Activated CD4-positive, alpha-beta T cell treated with anti-CD3 and anti-CD28 coated beads, Interleukin-2, amount 10 ng/mL, durations not matched to agents 24 days and 14 days (primary cell): ENCODE measurements at regions of chr10 and their contacts with region 1.

Region 1: DNA sequence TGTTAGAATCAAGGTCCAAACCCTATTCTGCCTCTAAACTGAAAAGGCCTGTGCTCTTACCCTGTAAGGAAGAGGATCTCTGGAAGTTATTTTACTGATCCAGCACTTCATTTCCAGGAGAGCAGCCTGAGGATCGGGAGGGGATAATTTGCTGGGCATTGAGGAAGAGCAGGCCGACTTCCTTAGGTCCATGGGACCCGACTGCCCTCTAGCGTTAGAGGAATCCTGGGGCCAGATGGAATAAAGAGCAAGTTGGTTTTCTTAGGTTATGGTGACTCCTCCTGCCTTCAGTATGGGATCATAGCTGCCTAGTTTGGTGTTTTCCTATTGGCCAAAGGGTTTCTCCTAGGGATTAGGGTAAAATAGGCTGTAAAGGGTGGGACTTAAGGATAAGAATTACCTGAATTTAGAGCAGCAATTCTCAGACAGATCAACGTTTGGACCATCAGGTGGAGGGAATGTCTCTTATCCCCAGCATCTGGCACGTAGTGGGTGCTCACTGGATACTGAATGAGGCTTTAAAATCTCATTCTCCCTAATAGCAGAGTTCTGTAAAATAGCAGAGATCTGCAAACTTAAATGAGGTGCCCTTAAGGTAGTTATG is 40.0 kb upstream of the SORBS1 start:
- DNase-seq: peak; percentile 82
- H3K4me3 Mint-ChIP-seq: no peak overlapping the region
- H3K27ac Mint-ChIP-seq: no peak overlapping the region
- H3K4me1 Mint-ChIP-seq: no peaks in the 10 kb centered on the region
- H3K27me3 Mint-ChIP-seq: peaks cover 16% of the 10 kb centered on the region

Region 2: DNA sequence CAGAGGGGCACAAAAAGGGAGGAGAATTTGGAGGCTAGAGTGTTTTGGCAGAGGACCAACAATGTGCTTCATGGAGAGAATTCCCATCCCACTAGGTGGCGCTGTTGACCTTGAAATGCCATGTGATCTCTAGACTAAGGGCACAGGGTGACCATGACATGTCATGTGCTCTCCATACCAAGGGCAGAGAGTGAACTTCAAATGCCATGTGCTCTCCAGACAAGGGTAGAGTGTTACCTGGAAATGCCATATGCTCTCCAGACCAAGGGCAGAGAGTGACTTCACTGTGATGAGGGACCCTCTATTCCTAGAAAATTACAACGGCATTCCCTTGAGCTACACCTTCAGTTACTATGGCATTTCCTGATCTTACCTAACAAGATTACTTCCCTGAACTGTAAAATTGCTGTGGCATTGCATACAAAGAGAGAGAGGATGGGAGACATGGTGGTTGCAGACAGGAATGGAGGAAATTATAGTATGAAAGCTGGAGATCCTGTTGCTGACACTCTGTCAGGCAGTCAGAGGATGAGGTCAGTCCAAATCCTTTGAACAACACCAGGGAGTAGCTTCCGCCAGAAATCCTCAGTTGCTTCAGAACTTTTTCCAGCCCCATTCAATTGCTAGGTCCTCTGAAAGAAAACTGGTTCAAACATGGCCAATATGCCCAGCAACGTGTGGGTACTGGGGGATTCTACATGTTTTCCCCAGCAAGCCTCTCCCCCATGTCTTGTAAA is 468.0 kb before region 1 on chr10:
- intact Hi-C with region 1: loop called (anchors 5 kb)
- DNase-seq: peak; percentile 93
- H3K4me3 Mint-ChIP-seq: no peak overlapping the region
- H3K27ac Mint-ChIP-seq: no peak overlapping the region
- H3K4me1 Mint-ChIP-seq: peaks cover 3% of the 10 kb centered on the region
- H3K27me3 Mint-ChIP-seq: peaks cover 4% of the 10 kb centered on the region

Region 3: GRCh38 chr10:95430231-95430951 is 170.8 kb before region 1 on chr10:
- intact Hi-C with region 1: loop called (anchors 1 kb)
- DNase-seq: peak; percentile 81
- H3K4me3 Mint-ChIP-seq: no peak overlapping the region
- H3K27ac Mint-ChIP-seq: no peak overlapping the region
- H3K4me1 Mint-ChIP-seq: no peaks in the 10 kb centered on the region
- H3K27me3 Mint-ChIP-seq: peaks cover 3% of the 10 kb centered on the region